Activated T-helper 2 cell treated with anti-CD3 and anti-CD28 coated beads, Interferon-gamma antibody, Interleukin-2, Interleukin-4, amounts not matched to agents 10 μg/mL and 5 μg/mL and 100 μg/mL, durations not matched to agents 14 hours and 24 hours and 36 hours (primary cell): ENCODE measurements at regions of chr21 and their contacts with region 1.

Region 1: DNA sequence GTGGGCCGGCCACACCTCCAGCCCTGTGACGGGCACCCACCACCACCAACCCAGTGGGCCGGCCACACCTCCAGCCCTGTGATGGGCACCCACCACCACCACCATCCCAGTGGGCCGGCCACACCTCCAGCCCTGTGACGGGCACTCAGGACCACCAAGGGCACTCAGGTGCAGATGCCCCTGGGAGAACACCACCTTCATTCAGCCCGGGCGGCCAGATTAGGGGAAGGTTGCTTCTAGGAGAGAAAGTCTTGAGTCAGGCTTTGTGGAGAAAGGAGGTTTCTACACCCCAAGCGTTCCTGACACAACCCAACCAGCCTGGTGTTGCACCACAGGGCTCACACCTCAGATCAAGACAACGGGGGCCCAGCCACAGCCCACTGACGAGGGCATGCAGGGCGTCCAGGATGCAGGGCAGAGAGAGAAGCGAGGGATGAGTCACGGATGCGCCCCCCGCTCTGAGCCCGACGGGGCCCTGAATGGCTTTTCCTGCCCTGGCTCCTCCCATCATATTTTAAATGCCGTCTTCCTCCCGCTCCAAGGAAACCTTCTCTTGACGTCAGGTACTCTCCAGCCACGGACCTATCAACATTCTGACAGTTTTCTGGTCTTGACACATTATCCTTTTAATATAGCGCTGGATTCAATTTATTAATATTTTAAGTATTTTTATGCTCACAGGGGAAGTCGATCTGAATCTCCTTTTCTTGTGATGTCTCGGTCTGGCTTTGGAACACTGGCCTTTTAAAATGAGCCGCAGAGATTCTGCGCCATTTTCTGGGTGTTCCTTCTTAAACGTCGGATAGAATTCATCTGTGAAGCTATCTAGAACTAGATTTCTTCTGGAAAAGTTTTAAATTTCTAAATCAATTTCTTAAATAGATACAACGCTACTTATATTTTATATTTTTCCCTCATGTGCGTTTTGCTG is 631 bp upstream of the SPATC1L start:
- DNase-seq: peak; percentile 78
- H3K4me3 Mint-ChIP-seq: peak overlapping the region; percentile 86
- H3K27ac Mint-ChIP-seq: peak overlapping the region; percentile 90
- H3K4me1 Mint-ChIP-seq: peaks cover 7% of the 10 kb centered on the region
- H3K27me3 Mint-ChIP-seq: no peaks in the 10 kb centered on the region

Region 2: DNA sequence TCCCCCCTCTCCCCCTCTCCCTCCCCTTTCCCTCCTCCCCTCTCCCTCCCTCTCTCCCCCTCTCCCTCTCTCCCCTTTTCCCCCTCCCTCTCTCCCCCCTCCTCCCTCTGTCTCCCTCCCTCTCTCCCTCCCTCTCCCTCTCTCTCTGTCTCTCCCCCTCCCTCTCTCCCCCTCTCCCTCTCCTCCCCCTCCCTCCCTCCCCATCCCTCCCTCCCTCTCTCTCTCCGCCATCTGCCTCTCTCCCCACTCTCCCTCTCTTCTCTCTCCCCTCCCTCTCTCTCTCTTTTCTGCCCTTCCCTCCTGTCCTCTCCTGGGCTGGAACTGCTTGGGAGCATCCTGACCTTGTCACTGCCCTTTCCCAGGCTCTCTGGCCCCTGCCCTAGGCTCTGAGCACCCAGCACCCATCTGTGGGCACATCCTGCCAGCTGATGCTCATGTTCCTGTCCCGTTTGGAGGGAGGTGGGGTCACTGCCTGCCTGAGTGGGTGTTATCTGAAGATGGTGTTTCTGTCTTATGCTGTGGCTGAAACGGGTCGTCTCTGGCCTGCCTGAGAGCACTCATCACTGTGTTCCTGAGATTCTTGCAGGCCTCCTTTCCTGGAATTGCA is 40.3 kb before region 1 on chr21:
- intact Hi-C with region 1: loop called (anchors 2 kb)
- DNase-seq: no peak
- H3K4me3 Mint-ChIP-seq: no peak overlapping the region
- H3K27ac Mint-ChIP-seq: peak overlapping the region; percentile 86
- H3K4me1 Mint-ChIP-seq: peaks cover 10% of the 10 kb centered on the region
- H3K27me3 Mint-ChIP-seq: no peaks in the 10 kb centered on the region

Region 3: GRCh38 chr21:46171996-46172862 is 12.7 kb before region 1 on chr21:
- intact Hi-C with region 1: no loop called
- DNase-seq: no peak
- H3K4me3 Mint-ChIP-seq: no peak overlapping the region
- H3K27ac Mint-ChIP-seq: no peak overlapping the region
- H3K4me1 Mint-ChIP-seq: peaks cover 6% of the 10 kb centered on the region
- H3K27me3 Mint-ChIP-seq: peaks cover 21% of the 10 kb centered on the region